ENCODE measurements at regions of chr4 and their contacts with region 1.

Region 1: GRCh38 chr4:39970671-39971640 is 6.8 kb downstream of the PDS5A start:
- DNase-seq: peak in 2 of 5 donors; percentile 52 to 54
- H3K4me3 ChIP-seq: no peak overlapping the region
- H3K27ac ChIP-seq: peak overlapping the region in 1 of 2 donors; percentile 17
- H3K4me1 ChIP-seq: peaks cover 8% of the 10 kb centered on the region
- H3K27me3 ChIP-seq: no peaks in the 10 kb centered on the region
- CTCF ChIP-seq: no peak
- EP300 ChIP-seq: no peak
- POLR2A ChIP-seq: no peak

Region 2: DNA sequence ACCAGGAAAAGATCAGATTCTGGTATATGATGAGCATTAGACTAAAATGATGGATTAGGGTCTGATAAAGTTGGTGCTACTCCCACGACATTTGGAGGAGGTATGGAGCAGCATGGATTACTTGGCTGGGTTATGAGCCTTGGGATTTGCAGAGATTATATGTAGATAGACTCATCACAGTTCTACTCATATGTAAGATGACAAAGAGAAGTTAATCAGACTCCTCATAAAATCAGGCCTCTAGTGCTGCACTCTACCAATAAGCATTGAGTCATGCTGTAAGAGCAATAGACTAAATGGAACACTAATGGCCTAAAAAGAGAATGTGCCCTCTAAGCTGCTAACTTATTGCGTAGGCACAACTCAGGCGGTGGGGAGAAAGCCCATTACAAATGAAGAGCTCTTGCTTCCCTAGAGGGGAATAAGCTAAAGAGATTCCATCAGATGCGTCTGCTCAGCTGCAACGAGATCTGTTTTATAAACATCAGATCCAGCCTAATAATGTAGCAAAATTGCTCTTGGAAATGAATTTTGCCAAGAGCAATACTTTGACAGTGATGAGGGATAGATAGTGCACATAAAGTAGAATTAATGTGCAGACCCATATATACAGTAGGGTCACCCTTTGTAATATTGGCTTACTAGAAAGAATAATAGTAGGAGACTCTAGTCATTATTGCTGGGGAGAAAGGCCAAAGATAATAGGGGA is 494.6 kb before region 1 on chr4:
- intact Hi-C with region 1: loop called in 1 of 4 experiments (anchors 5 kb)
- DNase-seq: no peak
- H3K4me3 ChIP-seq: no peak overlapping the region
- H3K27ac ChIP-seq: no peak overlapping the region
- H3K4me1 ChIP-seq: no peaks in the 10 kb centered on the region
- H3K27me3 ChIP-seq: no peaks in the 10 kb centered on the region
- CTCF ChIP-seq: no peak
- EP300 ChIP-seq: no peak
- POLR2A ChIP-seq: no peak